ENCODE measurements at regions of chr1 and their contacts with region 1.

Region 1: DNA sequence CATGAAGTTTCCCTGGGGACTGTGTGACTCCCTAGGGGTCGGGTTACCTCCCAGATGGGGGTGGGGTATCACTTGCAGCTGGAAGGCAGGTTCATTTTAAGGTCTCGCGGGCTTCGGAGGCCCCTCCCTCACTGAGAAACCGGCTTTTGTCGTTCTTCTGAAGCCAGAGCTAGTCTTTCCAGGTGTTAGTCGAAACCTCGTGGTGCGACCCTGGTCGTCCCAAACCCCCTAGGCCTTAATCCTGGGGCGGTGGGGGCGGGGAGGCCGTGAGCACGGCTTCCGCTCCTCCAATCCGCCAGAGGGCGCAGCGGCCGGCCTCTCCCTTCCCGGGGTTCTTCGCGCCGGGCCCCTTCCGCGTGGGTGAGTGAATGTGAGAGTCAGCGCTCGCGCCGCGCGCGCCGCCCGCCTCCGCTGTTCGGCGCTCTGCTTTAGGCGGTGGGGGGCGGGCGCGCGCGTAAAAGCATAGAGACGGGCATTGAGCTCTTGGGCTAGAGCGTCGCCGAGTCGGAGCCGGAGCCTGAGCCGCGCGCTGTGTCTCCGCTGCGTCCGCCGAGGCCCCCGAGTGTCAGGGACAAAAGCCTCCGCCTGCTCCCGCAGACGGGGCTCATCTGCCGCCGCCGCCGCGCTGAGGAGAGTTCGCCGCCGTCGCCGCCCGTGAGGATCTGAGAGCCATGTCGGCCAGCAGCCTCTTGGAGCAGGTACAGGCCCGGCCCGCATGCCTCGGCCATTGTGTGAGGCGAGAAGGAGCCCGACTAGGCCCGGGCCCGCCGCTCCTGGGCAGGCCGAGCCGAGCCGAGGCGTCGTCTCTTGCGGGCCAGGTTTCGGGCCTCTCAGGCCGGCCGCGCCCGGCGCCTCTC is at the start of gene YTHDF2:
- DNase-seq: peak; percentile 99
- ATAC-seq: peak; percentile 99
- total RNA-seq, gene YTHDF2: 31.3 TPM

Region 2: DNA sequence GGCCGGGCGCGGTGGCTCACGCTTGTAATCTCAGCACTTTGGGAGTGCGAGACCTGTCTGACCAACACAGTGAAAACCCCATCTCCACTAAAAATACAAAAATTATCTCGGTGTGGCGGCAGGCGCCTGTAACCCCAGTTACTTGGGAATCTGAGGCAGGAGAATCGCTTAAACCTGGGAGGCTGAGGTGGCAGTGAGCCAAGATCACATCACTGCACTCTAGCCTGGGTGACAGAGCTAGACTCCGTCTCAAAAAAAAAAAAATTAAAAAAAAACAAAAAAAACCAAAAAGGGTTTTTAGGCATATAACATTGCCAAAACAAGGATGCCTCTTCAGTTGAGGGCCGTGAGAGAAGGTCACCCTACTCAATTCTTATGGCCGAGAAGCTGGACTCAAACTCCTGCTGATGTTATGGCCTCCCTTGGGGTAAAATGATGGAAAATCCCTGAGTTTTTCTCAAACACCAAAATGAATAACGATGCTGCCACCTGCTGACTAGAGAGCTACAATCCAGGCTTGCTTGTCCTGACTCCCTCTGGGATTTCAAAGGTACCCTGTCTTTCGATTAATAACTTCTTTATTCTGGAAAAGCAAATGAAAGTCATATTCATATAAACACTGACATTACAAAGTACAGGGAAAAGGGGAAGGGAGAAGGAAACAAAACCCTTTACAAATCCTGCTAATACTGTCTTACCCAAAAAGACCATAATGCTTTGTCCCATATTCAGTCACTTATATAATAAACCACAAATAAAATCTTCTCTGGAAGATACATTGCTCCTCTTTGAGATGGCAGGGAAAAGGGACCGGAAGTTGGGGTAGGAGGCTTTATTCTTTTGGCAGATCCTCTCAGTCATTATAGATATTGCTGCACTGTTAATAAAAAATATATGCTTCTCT is 133.9 kb before region 1 on chr1:
- intact Hi-C with region 1: no loop called
- DNase-seq: peak; percentile 48
- ATAC-seq: peak; percentile 82

Region 3: GRCh38 chr1:28613175-28613574 is 123.5 kb before region 1 on chr1:
- intact Hi-C with region 1: no loop called
- DNase-seq: no peak
- ATAC-seq: no peak

Region 4: GRCh38 chr1:28642847-28643635 is 93.6 kb before region 1 on chr1 and contains the start of gene TAF12:
- intact Hi-C with region 1: loop called (anchors 5 kb)
- DNase-seq: peak; percentile 95
- ATAC-seq: peak; percentile 97
- total RNA-seq, gene TAF12: 27.4 TPM

Measured in Right ventricle myocardium superior (tissue), 1 donor.